ENCODE measurements at regions of chr3 and their contacts with region 1.

Region 1: DNA sequence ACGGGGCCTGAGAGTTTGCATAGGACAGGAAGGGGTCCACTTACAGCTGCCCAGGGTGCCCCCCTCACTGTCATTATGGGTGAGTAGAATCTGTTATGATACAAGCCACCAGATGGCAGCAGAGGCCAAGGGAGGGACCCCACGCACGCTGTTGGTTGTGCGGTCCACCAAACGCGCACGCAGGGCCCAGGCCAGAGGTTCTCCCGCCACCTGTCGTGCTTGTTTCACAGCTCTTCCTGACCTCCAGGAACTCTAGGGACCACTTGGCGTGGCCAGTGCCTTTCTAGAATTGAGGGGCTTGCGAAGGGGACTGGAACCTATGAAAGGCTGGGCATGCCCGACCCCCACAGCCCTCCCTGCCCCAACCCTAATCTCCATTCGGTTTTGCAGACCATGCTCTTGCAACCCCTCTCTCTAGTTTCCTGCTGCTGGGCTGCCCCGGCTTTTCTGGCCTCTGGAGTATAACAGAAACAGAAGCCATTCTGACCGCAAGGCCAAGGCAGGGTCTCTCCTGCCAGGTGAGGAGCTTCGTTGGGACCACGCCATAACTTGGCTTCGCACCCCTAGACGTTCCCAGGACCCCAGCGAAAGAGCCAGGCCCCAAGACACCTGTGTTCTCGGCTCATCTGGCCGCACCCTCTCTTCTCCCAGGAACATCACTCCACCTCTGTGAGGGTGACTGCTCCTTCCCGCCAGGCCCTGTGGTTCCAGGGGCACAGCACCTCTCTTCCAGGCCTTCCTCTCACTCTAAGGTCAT is 46.0 kb downstream of the ALDH1L1 start:
- DNase-seq: peak; percentile 41 to 57 (median 57)
- ATAC-seq: peak; percentile 11 to 69 (median 44)
- H3K4me3 ChIP-seq: no peak overlapping the region
- H3K27ac ChIP-seq: no peak overlapping the region
- H3K4me1 ChIP-seq: no peaks in the 10 kb centered on the region
- H3K27me3 ChIP-seq: no peaks in the 10 kb centered on the region
- CTCF ChIP-seq: peak; percentile 57 to 73 (median 64)
- POLR2A ChIP-seq: no peak

Region 2: DNA sequence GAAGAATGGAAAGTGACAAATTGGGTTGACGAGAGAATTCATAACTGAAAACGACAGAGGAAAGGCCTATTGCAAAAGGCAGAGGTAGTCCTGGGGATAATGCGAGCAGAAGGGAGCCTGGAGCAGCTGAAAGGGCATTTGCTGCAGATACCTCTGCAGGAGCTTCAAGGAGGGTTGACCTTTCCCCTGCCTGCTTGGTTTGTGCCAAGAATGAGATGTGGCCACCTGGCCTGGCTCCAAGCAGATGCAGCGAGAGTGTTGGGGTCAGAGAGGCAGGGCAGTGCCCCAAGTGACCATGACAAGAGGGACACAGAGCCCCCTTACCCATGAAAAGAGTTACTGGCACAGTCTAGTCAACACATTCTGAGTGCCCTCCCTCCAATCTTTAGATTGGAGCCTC is 94.0 kb before region 1 on chr3:
- intact Hi-C with region 1: no loop called
- DNase-seq: no peak
- ATAC-seq: peak in 2 of 4 donors; percentile 35 to 48
- H3K4me3 ChIP-seq: no peak overlapping the region
- H3K27ac ChIP-seq: no peak overlapping the region
- H3K4me1 ChIP-seq: peaks cover 0 to 4% (median 0%) of the 10 kb centered on the region in 4 donors
- H3K27me3 ChIP-seq: no peaks in the 10 kb centered on the region
- CTCF ChIP-seq: no peak
- POLR2A ChIP-seq: no peak

Region 3: DNA sequence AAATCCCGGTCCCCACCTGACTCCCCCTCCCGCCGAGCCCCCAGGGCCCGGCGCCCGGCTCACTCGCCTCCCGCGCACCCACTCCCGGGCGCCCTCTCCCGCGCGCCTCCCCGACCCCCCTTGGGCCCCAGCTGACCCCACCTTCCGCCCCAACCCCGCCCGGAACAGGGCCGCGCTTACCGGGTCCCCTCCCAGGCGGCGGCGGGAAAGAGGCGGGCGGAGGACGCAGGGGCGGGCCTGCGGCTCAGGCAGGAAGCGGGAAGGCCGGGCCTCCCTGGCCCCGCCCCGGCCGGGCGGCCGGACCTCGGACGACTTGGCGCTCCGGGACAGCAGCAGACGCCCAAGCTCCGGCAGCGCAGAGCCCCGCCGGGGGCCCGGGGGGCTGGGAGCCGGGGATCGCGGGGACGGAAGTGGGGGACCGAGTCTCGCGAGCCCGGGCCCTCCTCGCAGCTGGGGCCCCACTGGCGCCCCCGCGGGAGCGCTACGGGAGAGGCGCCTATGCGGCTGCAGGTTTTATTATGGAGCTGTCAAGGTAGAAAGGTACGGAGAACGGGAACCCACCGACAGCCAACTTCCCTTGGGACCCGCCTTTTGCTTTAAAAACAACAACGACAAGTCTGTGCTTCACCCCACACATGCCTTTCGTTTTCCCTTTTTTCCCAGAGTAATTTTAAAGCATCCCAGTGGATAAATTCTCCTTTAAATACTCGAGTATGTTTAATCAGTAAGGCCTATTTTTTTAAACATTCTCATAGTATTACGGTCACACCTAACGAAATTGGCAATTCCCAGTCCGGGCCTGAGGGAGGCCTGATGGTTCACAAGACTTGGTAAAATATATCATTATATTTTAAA is 50.3 kb before region 1 on chr3 and contains the start of gene SLC41A3:
- intact Hi-C with region 1: no loop called
- DNase-seq: peak; percentile 94 to 95 (median 95)
- ATAC-seq: peak; percentile 97 to 99 (median 98)
- H3K4me3 ChIP-seq: peak within 1 kb of the TSS; percentile 67 to 90 (median 78)
- H3K27ac ChIP-seq: peak within 1 kb of the TSS; percentile 67 to 86 (median 81)
- H3K4me1 ChIP-seq: no peaks in the 10 kb centered on the region
- H3K27me3 ChIP-seq: no peaks in the 10 kb centered on the region
- CTCF ChIP-seq: peak in 3 of 4 donors; percentile 28 to 42 (median 33)
- POLR2A ChIP-seq: peak; percentile 87
- total RNA-seq, gene SLC41A3: 12.7 to 29.1 (median 15.9) TPM

Region 4: DNA sequence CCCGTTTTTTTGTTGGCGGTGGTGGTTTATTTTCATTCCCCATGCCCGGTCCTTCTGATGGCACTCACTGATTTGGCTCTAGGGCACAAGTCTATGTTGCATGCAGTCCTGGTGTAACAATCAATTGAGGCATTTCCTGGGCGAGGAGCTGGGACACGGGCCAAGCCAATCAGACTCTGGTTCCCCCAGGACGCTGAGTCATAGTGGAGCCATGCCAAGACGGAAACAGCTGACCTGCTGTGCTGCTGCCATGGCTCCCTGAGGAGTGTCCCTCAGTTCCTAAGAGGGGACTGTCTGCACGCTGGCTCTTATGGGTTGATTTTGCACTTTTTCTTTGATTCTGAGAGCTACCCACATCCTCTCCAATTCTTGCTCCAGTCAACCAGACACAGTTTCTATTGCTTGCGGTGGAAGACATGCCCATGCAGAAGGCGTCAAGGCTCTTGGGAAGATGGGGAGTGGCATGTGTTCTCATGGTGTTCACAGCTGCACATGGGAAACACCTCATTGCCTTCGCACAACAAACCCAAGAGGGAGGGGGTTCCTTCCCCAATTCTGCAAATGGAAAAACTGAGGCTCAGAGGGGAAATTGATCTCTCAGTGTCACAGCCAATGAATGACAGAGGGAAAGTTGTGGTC is 74.3 kb after region 1 on chr3:
- intact Hi-C with region 1: loop called (anchors 10 kb)
- DNase-seq: peak; percentile 82 to 88 (median 82)
- ATAC-seq: peak; percentile 54 to 67 (median 64)
- H3K4me3 ChIP-seq: no peak overlapping the region
- H3K27ac ChIP-seq: no peak overlapping the region
- H3K4me1 ChIP-seq: peaks cover 0 to 12% (median 0%) of the 10 kb centered on the region in 4 donors
- H3K27me3 ChIP-seq: no peaks in the 10 kb centered on the region
- CTCF ChIP-seq: no peak
- POLR2A ChIP-seq: peak; percentile 19

Region 5: GRCh38 chr3:126226374-126226773 is 92.0 kb after region 1 on chr3:
- intact Hi-C with region 1: no loop called
- DNase-seq: no peak
- ATAC-seq: no peak
- H3K4me3 ChIP-seq: no peak overlapping the region
- H3K27ac ChIP-seq: no peak overlapping the region
- H3K4me1 ChIP-seq: no peaks in the 10 kb centered on the region
- H3K27me3 ChIP-seq: no peaks in the 10 kb centered on the region
- CTCF ChIP-seq: no peak
- POLR2A ChIP-seq: no peak

Region 6: DNA sequence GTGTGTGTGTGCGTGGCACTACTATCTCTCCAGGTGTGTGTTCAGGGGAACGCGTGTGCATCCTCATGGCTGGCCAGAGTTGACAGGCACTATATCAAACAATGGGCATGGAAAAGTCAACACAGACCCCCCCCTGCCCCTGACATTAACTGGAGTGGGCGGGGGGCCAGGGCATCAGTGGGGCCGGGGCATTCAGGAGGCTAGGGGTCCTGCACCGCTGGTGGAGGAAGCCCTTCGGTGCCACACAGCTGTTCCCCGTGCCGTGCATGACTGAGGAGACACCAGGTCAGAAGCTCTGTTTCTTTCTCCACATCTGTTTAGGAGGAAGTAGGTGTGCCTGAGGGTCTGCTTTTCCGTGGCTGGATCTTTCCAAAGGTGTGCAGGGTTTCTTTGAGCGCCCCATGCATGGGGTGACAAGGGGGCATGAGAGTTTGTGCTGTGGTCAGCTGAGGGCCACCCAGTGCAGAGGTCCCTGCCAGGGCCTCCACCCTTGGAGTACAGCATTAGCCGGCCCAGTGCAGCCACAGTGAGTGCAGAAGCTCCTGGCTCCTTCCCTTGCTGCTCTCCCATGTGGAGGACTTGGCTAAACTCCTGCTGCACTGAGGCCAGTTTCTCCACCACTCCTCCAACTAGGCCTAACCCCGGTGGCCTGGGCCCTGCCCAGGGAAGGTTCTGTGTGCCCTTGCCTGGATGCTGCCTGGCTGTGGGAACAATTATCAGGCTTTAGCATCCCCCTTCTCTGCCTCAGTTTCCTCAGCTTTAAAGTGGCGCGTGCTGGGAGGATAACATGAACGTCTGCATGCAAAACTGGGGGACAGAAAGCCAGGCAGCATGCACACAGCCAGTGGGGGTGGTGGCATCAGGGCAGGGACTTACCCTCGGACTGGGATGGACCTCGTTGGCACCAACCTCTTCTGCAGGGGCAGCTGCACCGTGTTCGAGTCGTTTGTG is 417.0 kb after region 1 on chr3:
- intact Hi-C with region 1: no loop called
- DNase-seq: peak; percentile 14 to 38 (median 35)
- ATAC-seq: no peak
- H3K4me3 ChIP-seq: no peak overlapping the region
- H3K27ac ChIP-seq: no peak overlapping the region
- H3K4me1 ChIP-seq: no peaks in the 10 kb centered on the region
- H3K27me3 ChIP-seq: no peaks in the 10 kb centered on the region
- CTCF ChIP-seq: no peak
- POLR2A ChIP-seq: no peak

Measured in right lobe of liver (tissue), 6 donors.